Brain microvascular endothelial cell (primary cell): ENCODE measurements at regions of chr16 and their contacts with region 1.

Region 1: DNA sequence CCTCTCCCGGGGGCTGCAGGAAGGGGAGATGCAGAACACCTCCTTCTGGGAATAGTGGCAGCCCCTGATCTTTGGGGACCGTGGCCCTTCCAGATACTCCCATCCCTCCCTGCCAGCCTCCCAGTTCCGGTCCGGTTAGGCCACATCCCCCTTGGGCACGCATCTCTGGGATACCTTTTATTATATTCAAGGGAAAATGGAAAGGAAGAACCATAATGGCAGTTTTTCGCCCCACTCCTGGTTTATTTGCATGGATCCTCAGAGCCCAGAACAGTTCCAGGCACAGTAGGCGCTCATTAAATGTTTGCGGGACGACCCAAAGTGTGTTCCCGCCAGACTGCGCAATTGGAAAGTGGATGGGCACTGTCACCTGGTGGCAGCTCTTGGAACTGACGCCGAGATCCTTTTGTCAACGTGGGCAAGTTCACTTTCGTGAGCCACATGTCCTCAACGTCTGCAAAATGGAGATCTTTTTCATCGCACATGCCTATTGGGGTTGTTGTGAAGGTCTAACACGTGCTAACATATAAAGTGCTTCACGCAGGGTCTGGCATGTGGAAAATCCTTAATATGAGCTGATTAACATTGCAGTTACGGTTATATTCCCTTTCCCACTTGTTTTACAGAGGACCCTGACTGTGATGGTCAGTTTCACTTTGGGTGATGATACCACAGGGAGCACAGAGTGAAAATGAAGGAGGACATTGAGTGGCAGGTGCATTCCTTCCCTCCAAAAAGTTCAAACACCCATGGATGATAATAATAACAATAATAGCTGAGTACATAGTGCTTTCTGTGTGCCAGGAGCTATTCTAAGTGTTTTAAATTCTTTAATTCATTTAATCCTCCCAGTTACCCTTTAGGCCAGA is 1.7 kb upstream of the GPRC5B start:
- DNase-seq: peak; percentile 75
- H3K4me3 ChIP-seq: peak overlapping the region; percentile 20
- H3K27ac ChIP-seq: no peak overlapping the region
- H3K27me3 ChIP-seq: no peaks in the 10 kb centered on the region
- CTCF ChIP-seq: peak; percentile 100

Region 2: DNA sequence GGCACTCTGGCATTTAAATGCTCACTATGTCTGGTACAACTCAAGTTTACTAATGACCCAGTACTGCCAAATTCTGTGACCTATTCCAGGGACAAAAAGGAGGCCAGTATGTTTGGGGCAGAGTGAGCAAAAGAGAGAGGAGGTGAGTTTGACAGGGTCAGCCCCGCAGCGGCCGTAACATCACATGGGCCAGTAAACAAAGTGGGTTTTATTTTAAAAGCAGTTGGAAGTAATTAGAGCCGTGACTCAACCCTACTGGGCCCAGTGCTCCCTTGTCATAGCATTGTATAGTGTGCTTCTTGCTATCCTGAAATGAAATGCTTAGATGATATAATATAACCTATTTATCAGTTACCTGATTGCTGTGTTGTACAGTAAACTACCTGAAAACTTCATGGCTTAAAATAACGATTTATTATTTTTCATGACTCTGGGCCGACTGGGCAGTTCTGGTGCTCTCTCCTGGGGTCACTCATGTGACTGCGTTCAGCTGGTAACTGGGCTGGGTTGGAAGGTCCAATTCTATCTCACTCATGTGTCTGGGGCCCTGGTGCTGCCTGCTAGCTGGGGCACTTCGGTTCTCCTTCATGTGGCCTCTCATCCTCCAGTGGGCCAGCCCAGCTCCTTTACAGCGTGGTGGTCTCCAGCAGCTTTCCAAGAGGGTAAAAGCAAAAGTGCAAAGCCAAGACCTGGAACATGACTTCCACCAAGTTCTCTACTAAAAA is 140.9 kb before region 1 on chr16:
- in situ Hi-C with region 1: loop called (anchors 25 kb)
- DNase-seq: no peak
- H3K4me3 ChIP-seq: no peak overlapping the region
- H3K27ac ChIP-seq: no peak overlapping the region
- H3K27me3 ChIP-seq: no peaks in the 10 kb centered on the region
- CTCF ChIP-seq: no peak

Region 3: GRCh38 chr16:20137194-20137593 is 250.9 kb after region 1 on chr16:
- in situ Hi-C with region 1: no loop called
- DNase-seq: no peak
- H3K4me3 ChIP-seq: no peak overlapping the region
- H3K27ac ChIP-seq: no peak overlapping the region
- H3K27me3 ChIP-seq: no peaks in the 10 kb centered on the region
- CTCF ChIP-seq: no peak